ENCODE measurements at regions of chr4 and their contacts with region 1.

Region 1: GRCh38 chr4:74675673-74676279 is 118.5 kb downstream of the BTC start:
- DNase-seq: peak; percentile 11
- ATAC-seq: peak; percentile 39
- H3K4me3 Mint-ChIP-seq: no peak overlapping the region
- H3K27ac Mint-ChIP-seq: no peak overlapping the region
- H3K4me1 Mint-ChIP-seq: peaks cover 2% of the 10 kb centered on the region
- H3K27me3 Mint-ChIP-seq: peaks cover 9% of the 10 kb centered on the region

Region 2: DNA sequence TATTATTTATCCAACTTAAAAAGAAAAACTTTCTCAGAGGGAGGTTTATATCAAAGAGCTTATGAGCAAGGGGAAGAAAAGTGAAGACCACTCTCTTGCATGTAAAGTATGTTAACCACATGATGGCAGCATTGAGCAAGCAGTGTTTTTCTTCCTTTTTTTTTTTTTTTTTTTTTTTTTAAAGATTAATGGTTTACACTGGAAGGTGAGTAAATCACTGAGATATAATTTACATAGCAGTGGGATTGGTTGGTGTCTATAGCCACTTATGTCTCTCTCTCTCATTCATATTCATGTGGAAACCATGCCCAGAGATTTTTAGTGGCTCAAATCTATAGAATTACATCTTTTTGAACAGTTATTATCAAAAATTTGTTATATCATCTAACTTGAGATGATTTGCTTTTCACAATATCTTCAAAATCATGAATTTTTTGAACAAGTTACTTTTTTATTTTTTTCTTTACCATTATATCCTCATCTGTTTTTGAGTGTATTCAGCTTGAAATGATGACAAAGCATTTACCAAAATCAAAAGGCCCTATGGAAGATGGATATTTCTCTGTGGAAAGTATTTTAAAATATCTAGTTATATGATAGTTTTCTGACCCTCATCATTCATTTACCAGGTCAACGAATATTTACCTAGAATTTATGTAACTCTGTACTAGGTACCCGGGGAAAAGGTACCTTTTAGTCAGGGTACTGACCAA is 486.3 kb before region 1 on chr4:
- CTCF ChIA-PET with region 1: no interaction called
- POLR2A ChIA-PET with region 1: no interaction called
- intact Hi-C with region 1: loop called (anchors 1 to 10 kb)
- DNase-seq: no peak
- ATAC-seq: peak; percentile 44
- H3K4me3 Mint-ChIP-seq: no peak overlapping the region
- H3K27ac Mint-ChIP-seq: no peak overlapping the region
- H3K4me1 Mint-ChIP-seq: no peaks in the 10 kb centered on the region
- H3K27me3 Mint-ChIP-seq: no peaks in the 10 kb centered on the region

Region 3: DNA sequence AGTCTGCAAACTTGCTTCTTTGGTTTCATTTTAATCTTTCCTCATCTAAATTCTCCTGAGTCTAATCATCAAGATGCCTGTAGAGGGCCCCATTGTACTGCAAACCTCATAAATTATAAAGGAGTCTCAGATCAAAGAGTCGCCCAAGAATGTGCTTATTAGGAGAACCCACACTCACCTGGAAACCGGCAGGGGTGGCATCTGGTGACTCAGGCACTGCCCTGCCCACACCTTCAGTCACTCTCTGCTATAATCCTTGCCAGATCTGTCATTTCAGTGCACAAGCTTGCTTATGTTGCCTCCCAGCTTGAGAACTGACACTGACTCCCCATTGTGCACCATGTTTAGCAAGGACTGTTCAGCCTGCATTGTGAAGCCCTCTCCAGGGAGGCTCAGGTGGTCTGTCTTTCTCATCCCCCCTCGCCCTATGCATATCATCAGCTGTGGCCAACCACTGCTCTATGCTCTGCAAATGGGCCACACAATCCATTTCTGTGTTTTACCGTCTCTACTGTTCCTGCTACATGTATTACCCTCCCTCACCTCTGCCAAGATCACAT is 355.1 kb before region 1 on chr4:
- CTCF ChIA-PET with region 1: interaction called, 39 read pairs
- POLR2A ChIA-PET with region 1: no interaction called
- intact Hi-C with region 1: loop called (anchors 1 to 2 kb)
- DNase-seq: peak; percentile 66
- ATAC-seq: peak; percentile 99
- H3K4me3 Mint-ChIP-seq: no peak overlapping the region
- H3K27ac Mint-ChIP-seq: no peak overlapping the region
- H3K4me1 Mint-ChIP-seq: peaks cover 5% of the 10 kb centered on the region
- H3K27me3 Mint-ChIP-seq: peaks cover 2% of the 10 kb centered on the region

Region 4: GRCh38 chr4:74376888-74377483 is 298.8 kb before region 1 on chr4:
- CTCF ChIA-PET with region 1: interaction called, 49 read pairs
- POLR2A ChIA-PET with region 1: no interaction called
- intact Hi-C with region 1: loop called (anchors 1 kb)
- DNase-seq: no peak
- ATAC-seq: peak; percentile 58
- H3K4me3 Mint-ChIP-seq: no peak overlapping the region
- H3K27ac Mint-ChIP-seq: no peak overlapping the region
- H3K4me1 Mint-ChIP-seq: peaks cover 4% of the 10 kb centered on the region
- H3K27me3 Mint-ChIP-seq: peaks cover 4% of the 10 kb centered on the region

Region 5: GRCh38 chr4:74623041-74623440 is 52.7 kb before region 1 on chr4:
- CTCF ChIA-PET with region 1: interaction called, 9 read pairs
- POLR2A ChIA-PET with region 1: no interaction called
- intact Hi-C with region 1: loop called in 1 of 2 experiments (anchors 5 kb)
- DNase-seq: peak; percentile 22
- ATAC-seq: peak; percentile 44
- H3K4me3 Mint-ChIP-seq: no peak overlapping the region
- H3K27ac Mint-ChIP-seq: peak overlapping the region; percentile 32
- H3K4me1 Mint-ChIP-seq: peaks cover 31% of the 10 kb centered on the region
- H3K27me3 Mint-ChIP-seq: peaks cover 5% of the 10 kb centered on the region

Measured in activated CD4-positive, alpha-beta T cell treated with anti-CD3 and anti-CD28 coated beads for 36 hours (primary cell).